CD14-positive monocyte (primary cell): ENCODE measurements at regions of chr16 and their contacts with region 1.

Region 1: DNA sequence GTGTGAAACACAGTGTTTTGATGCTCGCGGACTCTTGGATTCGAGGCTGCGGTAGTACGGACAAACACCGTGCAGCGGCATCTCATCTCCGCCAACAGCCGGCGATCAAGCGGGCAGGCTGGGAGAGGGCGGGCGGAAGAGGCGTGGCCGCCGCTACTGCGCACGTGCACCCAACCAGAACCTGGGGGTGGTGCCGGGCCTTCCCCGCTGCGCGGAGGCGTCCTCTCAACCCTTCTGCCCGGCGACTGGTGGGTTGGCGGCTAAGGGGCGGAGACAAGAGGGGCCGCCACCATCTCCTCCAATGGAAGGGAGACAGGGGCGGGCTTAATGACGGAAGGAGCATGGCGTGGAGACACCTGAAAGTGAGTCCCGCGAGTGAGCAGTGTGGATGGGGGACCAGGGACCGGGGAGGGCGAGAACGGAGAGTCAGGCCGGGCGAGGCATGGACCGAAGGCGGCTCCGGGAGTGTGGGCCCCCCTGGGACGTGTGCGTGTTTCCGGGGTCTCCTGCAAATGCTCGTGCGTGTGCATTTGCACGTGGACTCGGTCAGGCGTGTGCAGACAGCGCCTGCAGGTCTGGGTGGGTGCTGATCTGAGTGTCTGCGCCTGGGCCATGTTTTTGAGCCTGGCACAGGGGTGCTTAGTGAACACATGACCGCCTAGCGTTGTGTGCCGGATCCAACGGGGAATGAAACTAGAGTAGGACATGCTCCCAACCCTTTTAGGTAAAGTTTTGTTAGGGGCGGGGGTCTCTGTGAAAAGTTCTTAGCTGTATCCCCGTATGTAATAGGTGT is at the start of gene DHODH:
- DNase-seq: peak; percentile 96 to 97 (median 96)
- H3K4me3 ChIP-seq: peak within 1 kb of the TSS; percentile 87 to 99 (median 97)
- H3K4me3 Mint-ChIP-seq: peak within 1 kb of the TSS; percentile 93 to 99
- H3K27ac ChIP-seq: peak within 1 kb of the TSS in 1 of 2 donors; percentile 67
- H3K27ac Mint-ChIP-seq: peak within 1 kb of the TSS; percentile 84 to 90 (median 87)
- H3K4me1 ChIP-seq: peaks cover 7 to 10% of the 10 kb centered on the region in 2 donors
- H3K4me1 Mint-ChIP-seq: peaks cover 10% of the 10 kb centered on the region
- H3K27me3 ChIP-seq: no peaks in the 10 kb centered on the region
- H3K27me3 Mint-ChIP-seq: peaks cover 5 to 9% (median 6%) of the 10 kb centered on the region in 3 donors
- CTCF ChIP-seq: no peak
- polyA plus RNA-seq, gene DHODH: 2.2 to 3.8 (median 2.4) TPM

Region 2: GRCh38 chr16:72093448-72094265 is 85.0 kb after region 1 on chr16 and contains the starts of genes DHX38 and TXNL4B:
- intact Hi-C with region 1: loop called (anchors 5 kb)
- DNase-seq: peak; percentile 96 to 98 (median 96)
- H3K4me3 ChIP-seq: peak within 1 kb of the TSS; percentile 75 to 100 (median 80)
- H3K4me3 Mint-ChIP-seq: peak within 1 kb of the TSS; percentile 93 to 97
- H3K27ac ChIP-seq: peak within 1 kb of the TSS; percentile 83 to 93
- H3K27ac Mint-ChIP-seq: peak within 1 kb of the TSS; percentile 91 to 98 (median 96)
- H3K4me1 ChIP-seq: peaks cover 22 to 39% of the 10 kb centered on the region in 2 donors
- H3K4me1 Mint-ChIP-seq: peaks cover 35% of the 10 kb centered on the region
- H3K27me3 ChIP-seq: no peaks in the 10 kb centered on the region
- H3K27me3 Mint-ChIP-seq: no peaks in the 10 kb centered on the region
- CTCF ChIP-seq: no peak
- polyA plus RNA-seq, gene DHX38: 9.1 to 91.5 (median 19.2) TPM
- polyA plus RNA-seq, gene TXNL4B: 6.4 to 10.9 (median 7.0) TPM

Region 3: DNA sequence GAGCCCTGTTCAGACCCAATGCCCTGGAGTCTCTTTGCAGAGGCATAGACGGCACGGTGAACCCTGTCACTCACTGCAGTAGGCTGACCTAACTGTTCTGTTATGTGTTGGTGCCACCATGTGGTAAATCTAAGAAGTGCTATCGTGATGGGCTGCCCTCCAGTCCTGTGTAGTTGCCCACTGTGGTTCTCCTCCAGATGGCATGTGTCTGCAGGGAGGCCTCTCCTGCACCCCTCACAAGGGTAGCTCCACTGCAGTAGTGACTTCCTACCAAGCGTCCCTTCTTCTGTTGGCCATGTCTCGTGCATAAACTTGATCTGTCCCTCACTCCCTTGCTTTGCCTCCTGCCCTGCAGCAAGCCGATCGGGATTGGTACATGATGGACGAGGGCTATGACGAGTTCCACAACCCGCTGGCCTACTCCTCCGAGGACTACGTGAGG is 90.8 kb after region 1 on chr16:
- intact Hi-C with region 1: loop called (anchors 5 kb)
- DNase-seq: peak; percentile 39 to 59 (median 54)
- H3K4me3 ChIP-seq: no peak overlapping the region
- H3K4me3 Mint-ChIP-seq: no peak overlapping the region
- H3K27ac ChIP-seq: peak overlapping the region in 1 of 2 donors; percentile 28
- H3K27ac Mint-ChIP-seq: peak overlapping the region in 2 of 7 donors; percentile 41 to 58
- H3K4me1 ChIP-seq: peaks cover 9 to 11% of the 10 kb centered on the region in 2 donors
- H3K4me1 Mint-ChIP-seq: peaks cover 10% of the 10 kb centered on the region
- H3K27me3 ChIP-seq: no peaks in the 10 kb centered on the region
- H3K27me3 Mint-ChIP-seq: peaks cover 0 to 2% (median 0%) of the 10 kb centered on the region in 3 donors
- CTCF ChIP-seq: peak; percentile 73

Region 4: DNA sequence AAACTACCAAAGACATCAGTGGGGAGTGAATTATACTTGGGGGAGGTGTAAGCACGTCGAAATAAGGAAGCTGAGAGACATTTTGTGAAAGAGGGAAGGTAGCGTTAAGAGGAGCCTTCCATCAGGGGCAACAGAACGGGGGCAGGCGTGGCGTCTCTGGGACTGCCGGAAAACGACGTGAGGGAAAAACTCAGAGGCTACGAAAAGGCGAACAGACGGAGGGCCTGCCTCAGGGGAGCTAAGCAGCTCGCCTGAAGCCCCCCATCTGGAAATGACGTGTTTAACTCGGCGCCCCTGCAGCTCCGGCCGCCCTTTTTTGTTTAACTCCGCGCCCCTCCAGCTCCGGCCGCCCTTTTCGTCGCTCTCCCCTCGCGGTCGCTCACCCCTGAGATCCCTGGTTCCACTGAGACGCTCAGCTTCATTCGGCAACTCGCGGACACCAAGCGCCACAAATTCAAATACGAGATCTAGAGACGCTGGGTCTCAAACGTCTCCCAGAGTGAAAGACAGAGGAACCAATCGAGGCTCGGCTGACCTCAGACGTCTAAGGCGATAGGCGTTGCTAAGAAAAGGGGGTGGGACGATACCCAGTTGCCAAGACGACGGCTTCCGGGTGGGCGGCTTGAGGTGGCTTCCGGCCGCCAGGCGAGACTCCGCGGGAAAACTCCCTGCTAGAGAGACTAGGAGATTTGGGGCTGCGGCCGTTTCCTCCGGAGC is 656.0 kb after region 1 on chr16:
- intact Hi-C with region 1: loop called in 1 of 2 experiments (anchors 5 kb)
- DNase-seq: peak; percentile 92 to 98 (median 96)
- H3K4me3 ChIP-seq: peak overlapping the region; percentile 94 to 98 (median 96)
- H3K4me3 Mint-ChIP-seq: peak overlapping the region; percentile 99 to 100
- H3K27ac ChIP-seq: peak overlapping the region; percentile 54 to 89
- H3K27ac Mint-ChIP-seq: peak overlapping the region; percentile 97 to 99 (median 98)
- H3K4me1 ChIP-seq: peaks cover 10 to 13% of the 10 kb centered on the region in 2 donors
- H3K4me1 Mint-ChIP-seq: peaks cover 7% of the 10 kb centered on the region
- H3K27me3 ChIP-seq: no peaks in the 10 kb centered on the region
- H3K27me3 Mint-ChIP-seq: peaks cover 0 to 2% (median 0%) of the 10 kb centered on the region in 3 donors
- CTCF ChIP-seq: no peak